AG04450 (cell line): ENCODE measurements at regions of chr16 and their contacts with region 1.

Region 1: GRCh38 chr16:71461686-71462648 is at the start of gene ZNF23:
- DNase-seq: peak; percentile 49
- H3K4me3 ChIP-seq: peak within 1 kb of the TSS; percentile 99
- H3K27ac ChIP-seq: peak within 1 kb of the TSS; percentile 90
- H3K27me3 ChIP-seq: no peaks in the 10 kb centered on the region
- CTCF ChIP-seq: 0 out of 2 replicates have a peak, but pooled peaks have one; percentile 9
- polyA plus RNA-seq, gene ZNF23: 11.9 and 14.8 TPM in 2 replicates

Region 2: GRCh38 chr16:71412270-71413160 is 49.5 kb before region 1 on chr16:
- CTCF ChIA-PET with region 1: interaction called, 15 read pairs
- POLR2A ChIA-PET with region 1: no interaction called
- DNase-seq: peak; percentile 34
- H3K4me3 ChIP-seq: no peak overlapping the region
- H3K27ac ChIP-seq: no peak overlapping the region
- H3K27me3 ChIP-seq: peaks cover 21% of the 10 kb centered on the region
- CTCF ChIP-seq: peak; percentile 83

Region 3: GRCh38 chr16:71484006-71484893 is 22.3 kb after region 1 on chr16:
- CTCF ChIA-PET with region 1: interaction called, 4 read pairs
- POLR2A ChIA-PET with region 1: interaction called, 11 read pairs
- DNase-seq: peak; percentile 85
- H3K4me3 ChIP-seq: peak overlapping the region; percentile 88
- H3K27ac ChIP-seq: peak overlapping the region; percentile 100
- H3K27me3 ChIP-seq: no peaks in the 10 kb centered on the region
- CTCF ChIP-seq: no peak